AG04450 (cell line): ENCODE measurements at regions of chr17 and their contacts with region 1.

Region 1: DNA sequence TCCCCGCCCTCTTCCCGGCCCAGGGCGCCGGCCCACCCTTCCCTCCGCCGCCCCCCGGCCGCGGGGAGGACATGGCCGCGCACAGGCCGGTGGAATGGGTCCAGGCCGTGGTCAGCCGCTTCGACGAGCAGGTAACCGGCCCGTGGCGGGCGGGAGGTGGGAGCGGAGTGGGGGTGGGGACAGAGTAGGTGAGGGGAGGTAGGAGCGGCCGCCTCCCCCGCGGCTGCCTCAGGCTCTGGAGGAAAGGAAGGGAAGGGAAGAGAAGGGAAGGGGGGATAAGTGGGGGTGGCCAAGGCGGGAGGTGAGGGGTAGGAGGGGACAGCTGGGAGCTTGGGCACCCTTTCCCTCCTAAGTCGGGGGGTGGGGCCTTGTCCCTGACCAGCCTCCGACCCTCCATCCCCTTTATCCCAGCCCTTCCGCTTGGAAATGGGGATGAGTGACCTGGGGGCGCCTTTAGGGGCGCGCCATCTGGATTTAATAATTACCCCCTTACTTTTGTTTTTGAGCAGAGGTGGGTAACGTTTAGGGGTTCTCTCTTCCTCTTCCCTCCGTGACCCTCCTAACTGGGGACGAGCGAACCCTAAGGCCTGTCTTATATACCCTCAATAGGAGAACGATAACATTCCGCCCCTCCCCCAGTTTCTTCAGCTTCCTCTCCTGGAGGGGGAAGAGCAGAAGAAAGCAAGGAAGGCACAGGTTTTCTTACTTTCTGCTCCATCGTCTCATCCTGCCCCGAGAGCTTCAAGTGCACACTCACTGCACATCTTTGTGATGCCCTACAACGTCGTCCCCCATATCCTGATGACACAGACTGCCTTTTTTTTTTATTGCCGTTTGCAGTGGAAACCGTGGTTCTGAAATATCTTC is 695 bp downstream of the NF1 start:
- DNase-seq: no peak
- H3K4me3 ChIP-seq: peak overlapping the region; percentile 81
- H3K27ac ChIP-seq: peak overlapping the region; percentile 85
- H3K27me3 ChIP-seq: no peaks in the 10 kb centered on the region
- CTCF ChIP-seq: no peak

Region 2: DNA sequence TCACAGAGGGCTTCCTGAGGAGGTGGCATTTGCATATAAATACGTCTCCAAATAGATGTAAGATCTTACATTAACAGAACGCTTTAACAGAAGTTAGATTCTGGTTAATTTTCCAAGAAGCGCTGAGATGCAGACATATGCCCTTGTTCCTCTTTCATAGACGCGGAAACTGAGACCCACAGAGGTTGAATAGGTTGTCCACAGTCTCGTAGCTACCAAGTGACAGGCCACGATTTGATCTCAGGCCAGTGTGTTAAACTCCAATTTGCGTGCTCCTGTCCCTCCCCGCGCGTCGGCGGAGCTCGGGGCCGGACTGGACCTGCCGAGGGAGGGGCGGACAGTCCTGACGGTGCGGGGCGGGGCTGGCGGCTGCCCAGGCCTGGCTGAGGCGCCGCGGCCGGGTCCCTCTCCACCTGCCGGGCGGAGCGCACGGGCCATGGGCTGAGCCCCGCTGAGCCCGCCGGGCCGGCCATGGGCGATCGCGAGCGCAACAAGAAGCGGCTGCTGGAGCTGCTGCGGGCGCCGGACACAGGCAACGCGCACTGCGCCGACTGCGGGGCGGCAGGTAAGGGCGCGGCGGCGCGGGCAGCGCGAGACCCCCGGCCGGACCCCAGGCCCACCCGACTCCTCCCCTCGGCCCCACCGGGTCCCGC is 173.8 kb before region 1 on chr17 and contains the start of gene ADAP2:
- CTCF ChIA-PET with region 1: no interaction called
- POLR2A ChIA-PET with region 1: no interaction called
- DNase-seq: no peak
- H3K4me3 ChIP-seq: peak within 1 kb of the TSS; percentile 36; the same call in 1 of the 2 replicates
- H3K27ac ChIP-seq: no peak within 1 kb of the TSS
- H3K27me3 ChIP-seq: peaks cover 17% of the 10 kb centered on the region
- CTCF ChIP-seq: no peak
- polyA plus RNA-seq, gene ADAP2: 1.4 and 1.7 TPM in 2 replicates

Region 3: DNA sequence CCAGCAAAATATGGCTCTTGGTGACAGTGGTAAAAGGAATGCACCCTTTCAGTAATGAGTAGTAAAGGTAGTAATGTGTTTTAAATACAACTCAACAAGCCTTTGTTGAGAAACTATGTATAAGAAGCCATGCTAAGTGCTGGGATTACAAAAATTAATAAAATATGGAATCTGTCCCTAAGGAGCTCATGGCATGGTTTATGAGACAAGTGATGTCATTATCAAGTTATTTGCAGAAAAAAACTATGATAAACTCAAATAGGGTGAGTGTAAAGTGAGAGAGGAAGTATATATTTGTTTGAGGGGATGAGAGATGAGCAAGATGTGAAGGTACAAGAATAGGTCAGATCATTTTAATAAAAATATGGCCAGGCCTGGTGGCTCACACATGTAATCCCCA is 76.2 kb after region 1 on chr17:
- CTCF ChIA-PET with region 1: no interaction called
- POLR2A ChIA-PET with region 1: interaction called, 13 read pairs
- DNase-seq: no peak
- H3K4me3 ChIP-seq: no peak overlapping the region
- H3K27ac ChIP-seq: no peak overlapping the region
- H3K27me3 ChIP-seq: no peaks in the 10 kb centered on the region
- CTCF ChIP-seq: no peak